Right cardiac atrium (tissue), 5 donors: ENCODE measurements at regions of chr6 and their contacts with region 1.

Region 1: GRCh38 chr6:90296346-90297114 is at the start of gene BACH2:
- DNase-seq: peak; percentile 92 to 97 (median 93)
- ATAC-seq: peak; percentile 83 to 84
- H3K4me3 ChIP-seq: peak within 1 kb of the TSS; percentile 97
- H3K27ac ChIP-seq: peak within 1 kb of the TSS; percentile 8
- H3K4me1 ChIP-seq: no peaks in the 10 kb centered on the region
- H3K27me3 ChIP-seq: no peaks in the 10 kb centered on the region
- total RNA-seq, gene BACH2: 1.1 to 2.8 (median 1.6) TPM

Region 2: DNA sequence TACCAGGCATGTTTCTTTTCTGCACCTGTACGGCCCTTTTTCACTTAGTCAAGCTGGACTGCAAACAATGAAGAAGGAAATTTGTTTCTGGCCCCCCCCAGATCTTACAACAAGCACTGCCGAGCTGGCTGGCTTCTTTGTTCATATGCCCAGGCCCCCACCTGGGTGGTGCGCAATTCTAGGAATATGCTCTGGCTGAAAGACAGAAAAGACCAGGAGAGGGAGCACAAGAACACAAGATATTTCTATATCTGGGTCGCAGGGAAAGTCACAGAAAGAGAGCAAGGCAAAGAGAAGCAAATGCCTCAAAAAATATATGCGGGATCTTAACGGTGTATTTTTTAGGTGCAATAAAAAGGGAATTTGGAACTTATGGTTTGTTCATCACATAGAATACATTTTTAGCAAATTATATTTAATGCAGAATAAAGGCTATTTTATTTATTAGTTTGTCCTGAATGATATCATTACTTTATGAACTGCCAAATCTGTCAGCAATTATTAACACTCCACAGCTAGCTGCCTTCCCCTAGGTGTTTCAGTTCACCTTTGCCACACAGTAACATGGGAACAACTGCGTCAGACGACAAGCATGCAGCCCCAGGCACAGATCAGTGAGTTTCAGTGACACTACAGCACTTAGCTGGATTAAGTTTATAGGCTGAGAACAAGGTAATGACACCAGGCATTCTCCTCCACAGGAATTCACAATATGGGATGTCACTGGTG is 325.8 kb before region 1 on chr6:
- intact Hi-C with region 1: loop called in 3 of 4 experiments (anchors 10 kb)
- DNase-seq: peak in 1 of 3 donors; percentile 56
- ATAC-seq: peak; percentile 68 to 80
- H3K4me3 ChIP-seq: no peak overlapping the region
- H3K27ac ChIP-seq: no peak overlapping the region
- H3K4me1 ChIP-seq: no peaks in the 10 kb centered on the region
- H3K27me3 ChIP-seq: no peaks in the 10 kb centered on the region

Region 3: DNA sequence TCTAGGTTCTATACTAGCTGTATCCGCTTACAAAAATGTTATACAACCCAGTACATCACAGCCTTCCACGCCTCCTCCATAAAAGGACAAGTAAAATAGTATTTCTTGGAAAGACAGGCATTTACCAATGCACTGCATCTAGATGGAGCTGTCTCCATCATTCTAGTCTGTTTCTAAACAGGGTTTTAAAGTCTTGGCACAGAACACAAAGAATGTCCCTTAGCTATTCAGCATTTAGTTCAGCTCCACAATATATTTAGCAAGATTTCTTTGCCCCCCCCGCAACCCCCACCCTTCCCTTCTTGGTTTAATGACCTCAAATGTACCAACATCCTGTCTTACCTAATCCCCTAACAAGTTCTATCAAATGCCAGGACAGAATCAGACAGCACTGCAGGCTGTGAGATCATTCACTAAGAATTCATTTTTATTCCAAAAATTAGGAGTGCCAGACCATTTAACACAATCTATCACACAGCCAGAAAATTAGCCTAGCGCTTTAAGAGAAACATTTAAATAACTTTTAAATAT is 198.5 kb before region 1 on chr6:
- intact Hi-C with region 1: loop called in 1 of 4 experiments (anchors 10 kb)
- DNase-seq: peak; percentile 69 to 81 (median 72)
- ATAC-seq: peak; percentile 95 to 96
- H3K4me3 ChIP-seq: no peak overlapping the region
- H3K27ac ChIP-seq: peak overlapping the region; percentile 8
- H3K4me1 ChIP-seq: no peaks in the 10 kb centered on the region
- H3K27me3 ChIP-seq: no peaks in the 10 kb centered on the region

Region 4: DNA sequence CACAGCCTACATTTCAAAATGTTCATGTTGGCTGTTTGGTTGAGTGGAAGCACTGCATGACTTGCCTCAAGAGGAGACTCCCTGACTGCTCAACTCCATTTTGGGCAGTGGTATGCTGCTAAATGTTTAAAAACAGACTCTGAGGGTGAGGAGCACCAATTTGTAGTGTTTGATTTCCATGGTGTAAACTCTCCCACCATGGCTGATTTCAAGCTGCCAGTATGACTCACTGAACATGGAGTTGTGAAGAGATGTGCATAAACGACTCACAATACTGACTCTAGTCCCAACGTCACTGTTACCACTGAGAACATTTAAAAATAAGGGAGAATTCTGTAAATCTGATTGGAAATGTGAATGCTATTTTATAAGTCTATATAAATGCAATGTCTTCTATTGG is 70.3 kb before region 1 on chr6:
- intact Hi-C with region 1: no loop called
- DNase-seq: no peak
- ATAC-seq: peak in 1 of 2 donors; percentile 23
- H3K4me3 ChIP-seq: no peak overlapping the region
- H3K27ac ChIP-seq: no peak overlapping the region
- H3K4me1 ChIP-seq: peaks cover 4% of the 10 kb centered on the region
- H3K27me3 ChIP-seq: no peaks in the 10 kb centered on the region

Region 5: GRCh38 chr6:90256698-90257485 is 39.6 kb before region 1 on chr6:
- intact Hi-C with region 1: no loop called
- DNase-seq: no peak
- ATAC-seq: no peak
- H3K4me3 ChIP-seq: no peak overlapping the region
- H3K27ac ChIP-seq: no peak overlapping the region
- H3K4me1 ChIP-seq: peaks cover 2% of the 10 kb centered on the region
- H3K27me3 ChIP-seq: no peaks in the 10 kb centered on the region

Region 6: DNA sequence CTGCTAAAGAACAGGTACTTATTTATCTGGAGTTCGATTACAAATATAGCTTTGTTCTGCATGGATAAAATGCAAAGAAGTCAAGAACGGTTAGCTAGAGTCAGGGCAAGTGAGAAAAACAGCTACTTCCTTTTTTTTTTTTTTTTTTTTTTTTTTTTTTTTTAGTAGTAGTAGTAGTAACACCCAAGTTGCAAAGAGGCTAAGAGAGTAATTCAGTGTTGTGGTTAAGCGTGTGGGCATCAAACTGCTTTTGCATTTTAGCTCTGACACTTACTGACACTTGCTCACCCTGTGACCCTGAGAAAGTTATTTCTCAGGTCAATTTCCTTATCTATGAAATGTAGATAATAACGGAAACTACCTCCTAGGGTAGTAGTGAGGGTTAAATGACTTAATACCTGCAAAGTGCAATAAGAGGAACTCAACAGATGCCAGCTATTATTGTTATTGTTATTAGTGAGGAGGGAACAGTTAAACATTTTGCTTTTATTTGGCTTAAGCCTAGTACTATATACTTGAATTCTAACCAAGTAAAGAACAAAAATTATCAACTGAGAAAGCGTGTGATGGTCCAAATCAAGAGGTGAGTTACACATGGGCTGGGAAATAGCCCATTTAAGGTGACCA is 86.8 kb after region 1 on chr6:
- intact Hi-C with region 1: loop called in 1 of 4 experiments (anchors 10 kb)
- DNase-seq: no peak
- ATAC-seq: no peak
- H3K4me3 ChIP-seq: no peak overlapping the region
- H3K27ac ChIP-seq: no peak overlapping the region
- H3K4me1 ChIP-seq: no peaks in the 10 kb centered on the region
- H3K27me3 ChIP-seq: no peaks in the 10 kb centered on the region